Endothelial cell of umbilical vein (primary cell): ENCODE measurements at regions of chr12 and their contacts with region 1.

Region 1: DNA sequence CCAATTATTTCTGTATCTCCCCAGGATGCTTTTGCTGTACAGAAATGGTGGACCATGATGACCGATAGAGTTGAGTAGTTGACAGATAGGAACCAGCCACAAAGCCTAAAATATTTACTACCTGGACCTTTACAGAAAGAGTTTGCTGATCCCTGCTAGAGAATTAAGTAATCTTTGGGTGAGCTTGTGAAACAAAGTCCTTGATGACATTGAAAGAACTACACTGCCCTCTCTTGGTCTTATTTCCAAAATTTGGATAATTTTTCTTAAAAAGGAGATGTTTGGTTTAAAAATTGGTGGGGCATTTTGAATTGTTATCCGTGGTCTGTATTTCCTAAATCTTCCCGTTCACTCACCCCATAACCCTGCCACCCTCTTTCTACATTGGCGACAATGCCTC is 13.7 kb upstream of the TCTN1 start:
- DNase-seq: peak; percentile 59
- H3K4me3 ChIP-seq: no peak overlapping the region
- H3K27ac ChIP-seq: no peak overlapping the region
- H3K4me1 ChIP-seq: no peaks in the 10 kb centered on the region
- H3K27me3 ChIP-seq: no peaks in the 10 kb centered on the region
- CTCF ChIP-seq: peak; percentile 10 to 15
- POLR2A ChIP-seq: no peak

Region 2: DNA sequence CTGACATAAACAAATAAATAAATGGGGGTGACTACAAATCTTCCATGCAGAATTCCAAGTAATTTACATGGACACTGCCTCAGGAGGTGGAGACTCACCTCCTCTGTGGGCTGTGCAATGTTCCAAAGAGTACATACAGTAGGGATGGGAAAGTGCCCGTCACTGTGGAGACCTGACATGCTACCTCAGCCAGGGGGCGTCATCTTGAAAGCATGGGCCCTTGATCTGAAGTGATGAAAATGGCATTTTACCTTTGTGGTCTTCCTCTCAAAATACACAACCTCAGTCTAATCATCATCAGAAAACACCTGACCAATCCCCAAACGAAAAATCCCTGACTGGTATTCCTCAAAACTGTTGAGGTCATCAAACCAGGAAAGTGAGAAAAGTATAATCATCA is 245.2 kb before region 1 on chr12:
- CTCF ChIA-PET with region 1: interaction called, 10 read pairs
- POLR2A ChIA-PET with region 1: interaction called, 4 read pairs
- dilution Hi-C with region 1: no loop called
- intact Hi-C with region 1: no loop called
- DNase-seq: no peak
- H3K4me3 ChIP-seq: no peak overlapping the region
- H3K27ac ChIP-seq: no peak overlapping the region
- H3K4me1 ChIP-seq: peaks cover 16% of the 10 kb centered on the region
- H3K27me3 ChIP-seq: no peaks in the 10 kb centered on the region
- CTCF ChIP-seq: peak; percentile 22 to 27
- POLR2A ChIP-seq: no peak

Region 3: GRCh38 chr12:110468212-110469048 is 131.8 kb before region 1 on chr12 and contains the starts of genes FAM216A and GPN3:
- CTCF ChIA-PET with region 1: interaction called, 99 read pairs
- POLR2A ChIA-PET with region 1: no interaction called
- dilution Hi-C with region 1: no loop called
- intact Hi-C with region 1: loop called (anchors 1 kb)
- DNase-seq: peak; percentile 98
- H3K4me3 ChIP-seq: peak within 1 kb of the TSS; percentile 60 to 84 (median 77)
- H3K27ac ChIP-seq: peak within 1 kb of the TSS; percentile 52
- H3K4me1 ChIP-seq: peaks cover 13% of the 10 kb centered on the region
- H3K27me3 ChIP-seq: no peaks in the 10 kb centered on the region
- CTCF ChIP-seq: no peak
- POLR2A ChIP-seq: peak; percentile 64
- total RNA-seq, gene FAM216A: 7.9 and 11.7 TPM in 2 replicates
- total RNA-seq, gene GPN3: 25.0 and 29.6 TPM in 2 replicates

Region 4: GRCh38 chr12:110513842-110514241 is 86.4 kb before region 1 on chr12:
- CTCF ChIA-PET with region 1: interaction called, 117 read pairs
- POLR2A ChIA-PET with region 1: no interaction called
- dilution Hi-C with region 1: no loop called
- intact Hi-C with region 1: loop called (anchors 1 kb)
- DNase-seq: no peak
- H3K4me3 ChIP-seq: no peak overlapping the region
- H3K27ac ChIP-seq: no peak overlapping the region
- H3K4me1 ChIP-seq: no peaks in the 10 kb centered on the region
- H3K27me3 ChIP-seq: no peaks in the 10 kb centered on the region
- CTCF ChIP-seq: no peak
- POLR2A ChIP-seq: no peak

Region 5: GRCh38 chr12:110548678-110549077 is 51.6 kb before region 1 on chr12:
- CTCF ChIA-PET with region 1: interaction called, 88 read pairs
- POLR2A ChIA-PET with region 1: no interaction called
- dilution Hi-C with region 1: no loop called
- intact Hi-C with region 1: loop called (anchors 1 kb)
- DNase-seq: no peak
- H3K4me3 ChIP-seq: no peak overlapping the region
- H3K27ac ChIP-seq: no peak overlapping the region
- H3K4me1 ChIP-seq: peaks cover 35% of the 10 kb centered on the region
- H3K27me3 ChIP-seq: no peaks in the 10 kb centered on the region
- CTCF ChIP-seq: no peak
- POLR2A ChIP-seq: no peak

Region 6: GRCh38 chr12:110613771-110614684 is 13.8 kb after region 1 on chr12 and contains the start of gene TCTN1:
- CTCF ChIA-PET with region 1: interaction called, 12 read pairs
- POLR2A ChIA-PET with region 1: no interaction called
- dilution Hi-C with region 1: no loop called
- intact Hi-C with region 1: no loop called
- DNase-seq: peak; percentile 96
- H3K4me3 ChIP-seq: peak within 1 kb of the TSS; percentile 23 to 59 (median 51)
- H3K27ac ChIP-seq: no peak within 1 kb of the TSS
- H3K4me1 ChIP-seq: peaks cover 4% of the 10 kb centered on the region
- H3K27me3 ChIP-seq: no peaks in the 10 kb centered on the region
- CTCF ChIP-seq: no peak
- POLR2A ChIP-seq: peak; percentile 72
- total RNA-seq, gene TCTN1: 20.1 and 21.1 TPM in 2 replicates

Region 7: GRCh38 chr12:110750784-110751461 is 150.7 kb after region 1 on chr12:
- CTCF ChIA-PET with region 1: no interaction called
- POLR2A ChIA-PET with region 1: no interaction called
- dilution Hi-C with region 1: no loop called
- intact Hi-C with region 1: no loop called
- DNase-seq: no peak
- H3K4me3 ChIP-seq: no peak overlapping the region
- H3K27ac ChIP-seq: no peak overlapping the region
- H3K4me1 ChIP-seq: no peaks in the 10 kb centered on the region
- H3K27me3 ChIP-seq: peaks cover 0 to 2% of the 10 kb centered on the region in 2 experiments
- CTCF ChIP-seq: no peak
- POLR2A ChIP-seq: no peak

Region 8: GRCh38 chr12:110888256-110888991 is 288.2 kb after region 1 on chr12:
- CTCF ChIA-PET with region 1: interaction called, 26 read pairs
- POLR2A ChIA-PET with region 1: no interaction called
- dilution Hi-C with region 1: no loop called
- intact Hi-C with region 1: loop called (anchors 1 kb)
- DNase-seq: no peak
- H3K4me3 ChIP-seq: no peak overlapping the region
- H3K27ac ChIP-seq: no peak overlapping the region
- H3K4me1 ChIP-seq: peaks cover 5% of the 10 kb centered on the region
- H3K27me3 ChIP-seq: peaks cover 0 to 3% of the 10 kb centered on the region in 2 experiments
- CTCF ChIP-seq: no peak
- POLR2A ChIP-seq: no peak

Region 9: GRCh38 chr12:110913119-110914056 is 313.1 kb after region 1 on chr12:
- CTCF ChIA-PET with region 1: no interaction called
- POLR2A ChIA-PET with region 1: no interaction called
- dilution Hi-C with region 1: no loop called
- intact Hi-C with region 1: no loop called
- DNase-seq: no peak
- H3K4me3 ChIP-seq: no peak overlapping the region
- H3K27ac ChIP-seq: no peak overlapping the region
- H3K4me1 ChIP-seq: peaks cover 16% of the 10 kb centered on the region
- H3K27me3 ChIP-seq: no peaks in the 10 kb centered on the region
- CTCF ChIP-seq: no peak
- POLR2A ChIP-seq: no peak